Dendritic cell treated with granulocyte-macrophage colony-stimulating factor and Interleukin-4, amounts not matched to agents 40 ng/mL and 50 ng/mL, for 4 days (primary cell): ENCODE measurements at regions of chr9 and their contacts with region 1.

Region 1: DNA sequence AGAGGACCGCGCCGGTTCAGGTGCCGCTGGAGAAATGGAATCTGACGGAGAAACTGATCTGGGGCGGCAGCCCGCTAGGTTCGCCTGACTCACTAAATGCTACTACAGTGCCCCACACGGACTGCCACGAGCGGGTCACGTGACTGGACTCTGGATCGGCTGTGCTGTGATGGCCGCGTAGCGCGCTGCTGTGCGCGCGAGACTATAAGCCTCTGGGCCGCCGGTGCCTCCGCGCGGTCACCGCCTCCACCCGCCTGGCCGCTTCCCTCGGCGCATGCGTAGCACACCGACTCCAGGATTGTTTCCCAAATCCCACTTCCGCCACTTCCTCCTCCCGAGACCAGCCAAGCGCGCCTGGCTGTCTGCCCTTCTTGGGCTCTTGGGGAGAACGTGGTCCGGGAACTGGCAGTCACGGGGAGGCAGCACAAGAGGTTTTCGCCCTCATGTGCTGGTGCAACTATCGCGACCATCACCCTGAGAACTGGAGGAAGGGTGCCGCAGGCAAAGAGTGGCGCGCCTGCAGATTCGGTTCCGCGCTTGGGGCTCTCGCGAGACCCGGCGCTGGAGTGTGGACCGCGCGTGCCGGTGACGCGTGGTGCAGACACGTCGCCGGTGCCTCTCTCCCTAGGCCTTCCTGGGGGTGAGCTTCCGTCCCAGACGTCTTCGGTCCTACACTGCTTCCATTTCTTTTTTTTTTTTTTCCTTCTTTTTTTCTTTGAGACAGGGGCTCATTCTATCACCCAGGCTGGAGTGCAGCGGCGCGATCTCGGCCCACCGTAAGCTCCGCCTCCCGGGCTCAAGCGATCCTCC is 35.8 kb upstream of the GLDC start:
- H3K4me3 Mint-ChIP-seq: peak overlapping the region; percentile 97
- H3K27ac Mint-ChIP-seq: peak overlapping the region; percentile 100
- H3K4me1 Mint-ChIP-seq: peaks cover 26% of the 10 kb centered on the region
- H3K27me3 Mint-ChIP-seq: no peaks in the 10 kb centered on the region

Region 2: GRCh38 chr9:6412487-6413364 is 268.6 kb before region 1 on chr9 and contains the start of gene UHRF2:
- intact Hi-C with region 1: loop called (anchors 2 kb)
- H3K4me3 Mint-ChIP-seq: peak within 1 kb of the TSS; percentile 86
- H3K27ac Mint-ChIP-seq: peak within 1 kb of the TSS; percentile 87
- H3K4me1 Mint-ChIP-seq: peaks cover 27% of the 10 kb centered on the region
- H3K27me3 Mint-ChIP-seq: no peaks in the 10 kb centered on the region

Region 3: GRCh38 chr9:6703898-6704639 is 22.7 kb after region 1 on chr9:
- intact Hi-C with region 1: loop called (anchors 1 kb)
- H3K4me3 Mint-ChIP-seq: peak overlapping the region; percentile 86
- H3K27ac Mint-ChIP-seq: peak overlapping the region; percentile 96
- H3K4me1 Mint-ChIP-seq: peaks cover 7% of the 10 kb centered on the region
- H3K27me3 Mint-ChIP-seq: peaks cover 4% of the 10 kb centered on the region

Region 4: DNA sequence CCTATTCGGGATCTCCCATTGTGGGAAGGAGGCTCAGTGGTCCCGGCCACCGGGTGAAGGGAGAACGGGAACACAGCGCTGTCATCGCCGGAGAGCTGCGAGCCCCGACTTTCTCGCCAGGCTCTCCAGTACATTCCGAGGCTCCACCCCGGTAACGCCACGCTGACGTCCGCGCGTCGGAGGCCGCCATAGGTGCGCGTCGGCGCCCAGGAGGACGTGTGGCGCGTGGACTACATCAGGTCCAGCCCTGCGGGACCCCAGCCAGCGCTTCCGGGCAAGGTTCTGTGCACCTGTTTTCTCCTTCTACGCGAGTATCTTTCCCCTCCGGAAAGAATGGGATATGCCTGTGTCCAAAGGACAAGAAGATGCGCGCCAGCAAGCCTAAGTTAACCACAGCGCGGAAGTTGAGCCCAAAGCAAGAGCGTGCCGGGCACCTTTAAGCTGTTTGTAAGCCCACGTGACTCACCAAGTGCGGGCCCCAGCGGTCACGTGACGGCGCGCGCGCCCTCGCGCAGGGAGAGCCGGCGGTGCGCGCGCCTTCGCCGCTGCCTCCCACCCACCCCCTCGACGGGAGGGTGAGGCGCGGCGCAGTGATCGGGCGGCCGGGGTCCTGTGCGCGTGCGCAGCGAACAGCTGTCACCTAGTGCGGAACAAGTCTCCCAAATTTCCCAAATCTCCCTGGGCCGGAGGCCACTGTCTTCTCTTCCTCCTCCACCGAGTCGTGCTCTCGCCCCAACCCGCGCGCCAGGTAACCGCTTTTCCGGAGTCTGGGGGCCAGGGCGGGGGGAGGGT is 76.3 kb after region 1 on chr9 and contains the start of gene KDM4C:
- intact Hi-C with region 1: loop called (anchors 1 kb)
- H3K4me3 Mint-ChIP-seq: peak within 1 kb of the TSS; percentile 87
- H3K27ac Mint-ChIP-seq: peak within 1 kb of the TSS; percentile 100
- H3K4me1 Mint-ChIP-seq: peaks cover 28% of the 10 kb centered on the region
- H3K27me3 Mint-ChIP-seq: no peaks in the 10 kb centered on the region